GM12878 (cell line): ENCODE measurements at regions of chr9 and their contacts with region 1.

Region 1: DNA sequence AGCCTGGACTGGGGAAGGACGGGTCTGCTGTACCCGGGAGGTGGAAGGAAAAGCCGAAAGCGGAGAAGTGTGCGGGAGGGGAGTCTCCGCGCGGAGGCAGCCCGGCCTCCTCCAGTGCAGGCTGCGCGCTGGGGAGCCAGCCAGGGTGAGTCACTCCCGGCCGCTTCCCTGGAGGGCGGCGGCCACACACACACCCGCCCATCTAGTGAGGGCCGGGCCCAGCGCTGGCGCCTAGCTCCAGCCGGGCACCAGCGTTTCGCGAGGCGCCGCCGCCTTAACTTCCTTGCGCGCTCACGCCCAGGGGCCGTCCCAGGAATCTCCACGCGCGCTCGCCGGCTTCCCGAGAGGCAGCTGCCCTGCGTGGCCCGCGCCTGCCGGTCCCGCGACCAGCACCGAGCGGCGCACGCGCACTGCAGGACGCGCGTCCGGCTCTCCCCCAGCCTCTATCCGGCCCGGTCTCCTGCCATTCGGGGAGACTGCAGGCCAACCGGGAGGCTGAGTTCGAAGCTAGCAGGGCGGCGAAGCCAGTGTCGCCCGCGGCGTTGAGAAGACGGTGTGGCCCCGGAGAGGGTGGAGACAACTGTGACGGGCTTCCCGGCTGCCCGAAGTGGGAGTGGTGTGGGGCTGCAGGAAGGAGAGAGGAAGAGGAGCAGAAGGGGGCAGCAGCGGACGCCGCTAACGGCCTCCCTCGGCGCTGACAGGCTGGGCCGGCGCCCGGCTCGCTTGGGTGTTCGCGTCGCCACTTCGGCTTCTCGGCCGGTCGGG is at the start of gene JAK2:
- DNase-seq: peak; percentile 79
- ATAC-seq: peak; percentile 83
- H3K4me3 ChIP-seq: peak within 1 kb of the TSS; percentile 76
- H3K27ac ChIP-seq: peak within 1 kb of the TSS; percentile 89
- H3K4me1 ChIP-seq: peaks cover 26% of the 10 kb centered on the region
- H3K27me3 ChIP-seq: no peaks in the 10 kb centered on the region
- CTCF ChIP-seq: peak in 2 of 3 experiments; percentile 44 to 57; a peak in 3 of 6 replicates
- EP300 ChIP-seq: no peak
- POLR2A ChIP-seq: peak; percentile 93
- RAD21 ChIP-seq: peak; percentile 24
- polyA plus RNA-seq, gene JAK2: 4.1 to 4.9 TPM

Region 2: DNA sequence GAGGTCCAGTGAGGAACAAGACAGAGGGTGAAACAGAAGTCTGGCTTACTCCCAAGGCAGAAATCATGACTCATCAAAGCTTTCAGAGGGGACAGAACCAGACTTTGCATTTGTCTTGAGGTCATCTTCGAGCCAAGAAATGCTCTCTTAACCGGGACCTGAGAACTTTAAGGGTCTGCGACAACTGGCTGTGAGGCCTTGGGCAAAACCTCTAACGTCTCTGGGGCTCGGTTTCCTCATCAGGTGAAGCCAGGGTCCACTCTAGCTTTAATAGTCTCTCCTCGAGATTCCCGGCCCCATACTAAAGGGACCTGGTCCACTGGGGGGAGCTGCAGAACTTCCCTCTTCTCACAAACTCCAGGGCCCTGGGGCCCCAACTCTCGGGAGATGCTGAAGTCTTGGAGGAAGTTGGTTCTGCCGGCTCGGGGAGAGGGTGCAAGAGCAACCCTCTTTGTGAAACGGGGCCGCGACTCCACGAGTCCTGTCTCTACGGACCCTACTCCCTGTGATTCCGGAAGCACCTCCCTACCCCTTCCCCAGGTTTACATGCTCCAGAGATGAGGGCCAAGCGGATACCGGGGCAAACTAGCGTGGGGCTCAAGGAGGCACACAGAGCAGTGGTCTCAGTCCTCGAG is 687.5 kb before region 1 on chr9:
- CTCF ChIA-PET with region 1: no interaction called
- POLR2A ChIA-PET with region 1: no interaction called
- RAD21 ChIA-PET with region 1: no interaction called
- SMC1A ChIA-PET with region 1: no interaction called
- in situ Hi-C with region 1: no loop called
- intact Hi-C with region 1: no loop called
- DNase-seq: no peak
- ATAC-seq: peak; percentile 47
- H3K4me3 ChIP-seq: peak overlapping the region; percentile 71
- H3K27ac ChIP-seq: no peak overlapping the region
- H3K4me1 ChIP-seq: peaks cover 8% of the 10 kb centered on the region
- H3K27me3 ChIP-seq: peaks cover 19 to 20% of the 10 kb centered on the region in 2 experiments
- CTCF ChIP-seq: peak; percentile 13 to 18 (median 16); a peak in 1 of 6 replicates
- EP300 ChIP-seq: no peak
- POLR2A ChIP-seq: no peak
- RAD21 ChIP-seq: peak; percentile 22; the same call in 1 of the 2 replicates

Region 3: DNA sequence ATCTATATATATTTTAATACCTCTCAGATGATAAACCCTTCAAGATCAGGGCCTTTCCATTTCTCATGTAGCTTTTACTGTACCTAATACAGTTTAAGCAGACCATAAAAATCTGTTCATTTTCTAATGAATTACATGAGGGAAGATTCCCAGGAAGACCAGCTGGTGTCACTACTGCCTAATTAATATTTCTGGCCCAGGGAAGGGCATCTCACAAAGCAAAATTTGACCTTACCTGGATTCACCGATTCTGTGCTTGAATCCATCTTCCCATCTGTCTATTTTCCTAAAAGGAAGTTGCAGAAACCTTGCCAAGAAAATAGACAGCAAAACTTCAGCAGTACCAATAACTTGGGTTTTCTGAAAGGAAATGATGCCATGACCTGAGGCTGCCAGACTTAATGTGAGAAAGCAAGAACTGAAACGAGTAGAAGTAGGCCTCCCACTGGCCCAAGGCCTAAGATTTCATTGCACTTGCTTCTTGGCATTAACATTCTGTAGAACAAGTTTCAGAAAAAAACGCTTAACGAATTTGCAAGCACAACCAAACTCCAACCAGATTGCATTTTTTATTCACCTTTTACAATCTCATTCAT is 602.0 kb before region 1 on chr9:
- CTCF ChIA-PET with region 1: no interaction called
- POLR2A ChIA-PET with region 1: no interaction called
- RAD21 ChIA-PET with region 1: no interaction called
- SMC1A ChIA-PET with region 1: no interaction called
- in situ Hi-C with region 1: no loop called
- intact Hi-C with region 1: loop called (anchors 10 kb)
- DNase-seq: peak; percentile 40
- ATAC-seq: peak; percentile 87
- H3K4me3 ChIP-seq: no peak overlapping the region
- H3K27ac ChIP-seq: no peak overlapping the region
- H3K4me1 ChIP-seq: peaks cover 5% of the 10 kb centered on the region; the same call in 1 of the 2 replicates
- H3K27me3 ChIP-seq: no peaks in the 10 kb centered on the region
- CTCF ChIP-seq: peak; percentile 51 to 73 (median 58); a peak in 5 of 6 replicates
- EP300 ChIP-seq: no peak
- POLR2A ChIP-seq: no peak
- RAD21 ChIP-seq: peak; percentile 87

Region 4: GRCh38 chr9:4762108-4762885 is 222.5 kb before region 1 on chr9:
- CTCF ChIA-PET with region 1: interaction called, 147 read pairs
- POLR2A ChIA-PET with region 1: interaction called, 3 read pairs
- RAD21 ChIA-PET with region 1: interaction called, 92 read pairs
- SMC1A ChIA-PET with region 1: interaction called, 107 read pairs
- in situ Hi-C with region 1: loop called (anchors 5 kb)
- intact Hi-C with region 1: loop called (anchors 1 kb)
- DNase-seq: peak; percentile 81
- ATAC-seq: peak; percentile 92
- H3K4me3 ChIP-seq: peak overlapping the region; percentile 56
- H3K27ac ChIP-seq: peak overlapping the region; percentile 60
- H3K4me1 ChIP-seq: peaks cover 18% of the 10 kb centered on the region
- H3K27me3 ChIP-seq: no peaks in the 10 kb centered on the region
- CTCF ChIP-seq: peak; percentile 71 to 84 (median 84); a peak in 5 of 6 replicates
- EP300 ChIP-seq: peak in 1 of 2 experiments; percentile 41; a peak in 1 of 4 replicates
- POLR2A ChIP-seq: no peak
- RAD21 ChIP-seq: peak; percentile 96

Region 5: GRCh38 chr9:4886698-4887097 is 98.1 kb before region 1 on chr9:
- CTCF ChIA-PET with region 1: interaction called, 10 read pairs
- POLR2A ChIA-PET with region 1: no interaction called
- RAD21 ChIA-PET with region 1: interaction called, 4 read pairs
- SMC1A ChIA-PET with region 1: interaction called, 9 read pairs
- in situ Hi-C with region 1: no loop called
- intact Hi-C with region 1: loop called (anchors 5 kb)
- DNase-seq: peak; percentile 75
- ATAC-seq: peak; percentile 98
- H3K4me3 ChIP-seq: no peak overlapping the region
- H3K27ac ChIP-seq: no peak overlapping the region
- H3K4me1 ChIP-seq: peaks cover 11% of the 10 kb centered on the region; the same call in 1 of the 2 replicates
- H3K27me3 ChIP-seq: no peaks in the 10 kb centered on the region
- CTCF ChIP-seq: no peak; a peak in 1 of 6 replicates
- EP300 ChIP-seq: peak in 1 of 2 experiments; percentile 41; a peak in 1 of 4 replicates
- POLR2A ChIP-seq: no peak
- RAD21 ChIP-seq: no peak

Region 6: GRCh38 chr9:4970970-4971641 is 13.7 kb before region 1 on chr9:
- CTCF ChIA-PET with region 1: interaction called, 17 read pairs
- POLR2A ChIA-PET with region 1: interaction called, 18 read pairs
- RAD21 ChIA-PET with region 1: interaction called, 42 read pairs
- SMC1A ChIA-PET with region 1: interaction called, 24 read pairs
- in situ Hi-C with region 1: no loop called
- intact Hi-C with region 1: loop called (anchors 1 kb)
- DNase-seq: peak; percentile 76
- ATAC-seq: peak; percentile 95
- H3K4me3 ChIP-seq: peak overlapping the region; percentile 50; the same call in 1 of the 2 replicates
- H3K27ac ChIP-seq: peak overlapping the region; percentile 50
- H3K4me1 ChIP-seq: peaks cover 17% of the 10 kb centered on the region
- H3K27me3 ChIP-seq: no peaks in the 10 kb centered on the region
- CTCF ChIP-seq: no peak
- EP300 ChIP-seq: peak; percentile 36 to 64; a peak in 3 of 4 replicates
- POLR2A ChIP-seq: no peak
- RAD21 ChIP-seq: no peak

Region 7: GRCh38 chr9:5582835-5583195 is 598.0 kb after region 1 on chr9:
- CTCF ChIA-PET with region 1: interaction called, 4 read pairs
- POLR2A ChIA-PET with region 1: no interaction called
- RAD21 ChIA-PET with region 1: interaction called, 4 read pairs
- SMC1A ChIA-PET with region 1: interaction called, 11 read pairs
- in situ Hi-C with region 1: no loop called
- intact Hi-C with region 1: no loop called
- DNase-seq: peak; percentile 91
- ATAC-seq: peak; percentile 73
- H3K4me3 ChIP-seq: no peak overlapping the region
- H3K27ac ChIP-seq: peak overlapping the region; percentile 89
- H3K4me1 ChIP-seq: peaks cover 53% of the 10 kb centered on the region
- H3K27me3 ChIP-seq: no peaks in the 10 kb centered on the region
- CTCF ChIP-seq: no peak
- EP300 ChIP-seq: peak in 1 of 2 experiments; percentile 75; a peak in 3 of 4 replicates
- POLR2A ChIP-seq: peak; percentile 14; the same call in 1 of the 2 replicates
- RAD21 ChIP-seq: no peak